Heart left ventricle (tissue), 16 donors: ENCODE measurements at regions of chr2 and their contacts with region 1.

Region 1: GRCh38 chr2:96801005-96801785 is 14.9 kb upstream of the CNNM3 start:
- DNase-seq: peak; percentile 58 to 86 (median 71)
- ATAC-seq: peak; percentile 76 to 93 (median 90)
- H3K4me3 ChIP-seq: no peak overlapping the region
- H3K27ac ChIP-seq: peak overlapping the region in 1 of 12 donors; percentile 63
- H3K4me1 ChIP-seq: peaks cover 0 to 7% (median 2%) of the 10 kb centered on the region in 12 donors
- H3K27me3 ChIP-seq: no peaks in the 10 kb centered on the region
- CTCF ChIP-seq: peak; percentile 64 to 86 (median 80)
- POLR2A ChIP-seq: no peak

Region 2: GRCh38 chr2:96608469-96609455 is 192.4 kb before region 1 on chr2:
- intact Hi-C with region 1: no loop called
- DNase-seq: no peak
- ATAC-seq: peak in 3 of 4 donors; percentile 18 to 50 (median 42)
- H3K4me3 ChIP-seq: no peak overlapping the region
- H3K27ac ChIP-seq: peak overlapping the region in 2 of 12 donors; percentile 3 to 7
- H3K4me1 ChIP-seq: peaks cover 0 to 25% (median 14%) of the 10 kb centered on the region in 12 donors
- H3K27me3 ChIP-seq: no peaks in the 10 kb centered on the region
- CTCF ChIP-seq: no peak
- POLR2A ChIP-seq: no peak

Region 3: GRCh38 chr2:96747136-96747535 is 54.1 kb before region 1 on chr2:
- intact Hi-C with region 1: loop called in 1 of 10 experiments (anchors 5 kb)
- DNase-seq: no peak
- ATAC-seq: peak in 2 of 4 donors; percentile 25 to 33
- H3K4me3 ChIP-seq: peak overlapping the region in 1 of 12 donors; percentile 4
- H3K27ac ChIP-seq: peak overlapping the region in 5 of 12 donors; percentile 4 to 68 (median 41)
- H3K4me1 ChIP-seq: peaks cover 0 to 17% (median 0%) of the 10 kb centered on the region in 12 donors
- H3K27me3 ChIP-seq: no peaks in the 10 kb centered on the region
- CTCF ChIP-seq: no peak
- POLR2A ChIP-seq: no peak

Region 4: GRCh38 chr2:96769814-96770213 is 31.4 kb before region 1 on chr2:
- intact Hi-C with region 1: loop called in 1 of 10 experiments (anchors 5 kb)
- DNase-seq: peak; percentile 69 to 90 (median 77)
- ATAC-seq: peak; percentile 96 to 99 (median 96)
- H3K4me3 ChIP-seq: no peak overlapping the region
- H3K27ac ChIP-seq: peak overlapping the region in 6 of 12 donors; percentile 13 to 71 (median 42)
- H3K4me1 ChIP-seq: peaks cover 0 to 30% (median 5%) of the 10 kb centered on the region in 12 donors
- H3K27me3 ChIP-seq: no peaks in the 10 kb centered on the region
- CTCF ChIP-seq: no peak
- POLR2A ChIP-seq: no peak